ENCODE measurements at regions of chr1 and their contacts with region 1.

Region 1: DNA sequence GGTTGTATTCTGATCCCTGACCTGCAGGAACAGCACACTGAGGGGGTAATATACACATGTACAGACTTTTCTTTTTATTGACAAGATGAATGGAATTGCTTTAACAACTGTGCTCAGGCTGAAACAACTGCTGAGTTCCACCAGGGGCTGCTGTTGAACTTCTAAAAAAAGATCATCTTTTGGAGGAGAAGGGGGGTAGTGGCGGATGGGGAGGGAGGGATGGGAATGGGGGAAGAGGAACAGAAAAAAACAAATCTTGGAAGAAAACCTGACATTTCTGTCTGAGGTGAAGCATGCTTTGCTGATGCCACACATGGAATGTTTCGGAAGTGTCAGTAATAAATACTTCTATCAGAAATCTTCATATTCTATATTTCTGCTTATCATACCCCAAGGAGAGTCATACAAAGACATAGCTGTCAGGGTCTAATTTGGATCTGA is 75.0 kb downstream of the RWDD3 start:
- DNase-seq: peak in 38 of 42 donors; percentile 8 to 80 (median 48)

Region 2: DNA sequence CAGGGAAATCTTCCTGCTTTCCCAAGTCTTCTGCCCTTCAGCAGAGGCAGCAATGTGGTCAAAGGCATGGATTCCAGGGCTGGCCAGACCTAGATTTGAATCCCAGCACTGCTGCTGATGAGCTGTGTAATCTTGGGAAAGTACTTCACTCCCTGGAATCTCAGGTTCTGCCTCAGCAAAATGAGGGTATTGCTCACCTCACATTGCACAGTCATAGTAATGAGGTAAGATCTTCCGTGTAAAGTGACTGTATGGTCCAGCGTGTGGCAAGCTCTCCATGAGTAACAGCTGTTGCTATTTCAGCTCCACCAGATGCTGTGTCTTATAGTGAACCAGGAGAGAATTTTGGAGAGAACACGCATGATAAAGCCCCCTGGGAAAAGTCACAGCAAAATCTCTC is 711.4 kb before region 1 on chr1:
- intact Hi-C with region 1: no loop called
- DNase-seq: no peak

Region 3: GRCh38 chr1:95467036-95467435 is 158.0 kb after region 1 on chr1:
- intact Hi-C with region 1: loop called (anchors 5 kb)
- DNase-seq: no peak

Measured in head of caudate nucleus (tissue), 42 donors.